ENCODE measurements at regions of chr2 and their contacts with region 1.

Region 1: DNA sequence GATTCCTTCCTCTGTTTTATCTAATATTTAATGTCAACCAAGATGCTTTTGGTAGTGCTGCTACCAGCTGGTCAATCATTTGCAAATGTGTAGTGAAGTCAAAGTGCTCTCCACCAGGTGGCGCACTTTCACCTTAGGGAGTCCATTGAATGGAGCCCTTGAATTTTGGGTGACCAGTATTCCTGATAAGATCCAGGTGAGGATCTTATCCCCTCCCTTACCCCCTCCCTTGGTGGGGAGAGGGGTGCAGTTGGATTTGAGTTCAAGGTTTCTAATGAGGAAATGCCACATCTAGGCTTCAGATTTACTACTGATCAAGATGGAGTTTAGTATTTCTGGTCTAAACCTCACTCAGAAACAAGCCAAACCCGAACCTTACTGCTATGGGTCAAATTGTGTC is 12.0 kb upstream of the E2F6 start:
- DNase-seq: peak; percentile 91 to 97
- H3K4me3 ChIP-seq: no peak overlapping the region
- CTCF ChIP-seq: peak in 1 of 3 donors; percentile 40
- POLR2A ChIP-seq: no peak

Region 2: DNA sequence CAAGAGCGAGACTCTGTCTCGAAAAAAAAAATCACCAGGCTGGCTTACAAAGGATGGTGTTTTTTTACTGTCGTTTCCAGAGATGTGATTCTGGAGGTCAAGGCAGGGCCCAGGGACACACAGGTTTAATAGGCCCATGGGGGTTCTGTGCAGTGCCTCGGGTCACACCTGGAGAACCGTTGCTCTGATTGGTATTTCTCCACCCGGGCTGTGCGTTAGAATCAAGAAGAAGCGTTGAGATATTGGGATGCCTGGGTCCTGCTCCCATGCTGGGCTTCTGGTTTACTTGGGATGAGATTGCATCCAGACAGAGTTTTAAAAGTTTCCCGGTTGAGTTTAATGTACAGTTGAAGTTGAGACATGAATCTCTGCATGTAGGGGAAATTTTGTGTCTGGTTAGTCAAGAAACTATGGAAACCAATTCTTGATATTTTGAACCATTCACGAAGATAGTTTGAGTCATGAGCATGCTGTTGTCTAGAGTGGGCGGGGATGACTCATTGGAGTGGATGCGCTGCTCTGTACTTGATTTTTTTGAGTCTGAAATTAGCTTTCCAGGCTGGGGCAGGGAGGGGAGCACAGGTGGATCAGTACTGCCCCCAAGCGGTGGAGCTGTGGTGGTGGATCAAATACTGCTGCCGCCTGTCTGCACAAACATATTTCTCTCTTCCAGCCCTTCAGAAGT is 106.0 kb after region 1 on chr2:
- intact Hi-C with region 1: loop called (anchors 5 kb)
- DNase-seq: peak; percentile 81 to 92
- H3K4me3 ChIP-seq: no peak overlapping the region
- CTCF ChIP-seq: peak in 1 of 3 donors; percentile 21
- POLR2A ChIP-seq: no peak